ENCODE measurements at regions of chr12 and their contacts with region 1.

Region 1: DNA sequence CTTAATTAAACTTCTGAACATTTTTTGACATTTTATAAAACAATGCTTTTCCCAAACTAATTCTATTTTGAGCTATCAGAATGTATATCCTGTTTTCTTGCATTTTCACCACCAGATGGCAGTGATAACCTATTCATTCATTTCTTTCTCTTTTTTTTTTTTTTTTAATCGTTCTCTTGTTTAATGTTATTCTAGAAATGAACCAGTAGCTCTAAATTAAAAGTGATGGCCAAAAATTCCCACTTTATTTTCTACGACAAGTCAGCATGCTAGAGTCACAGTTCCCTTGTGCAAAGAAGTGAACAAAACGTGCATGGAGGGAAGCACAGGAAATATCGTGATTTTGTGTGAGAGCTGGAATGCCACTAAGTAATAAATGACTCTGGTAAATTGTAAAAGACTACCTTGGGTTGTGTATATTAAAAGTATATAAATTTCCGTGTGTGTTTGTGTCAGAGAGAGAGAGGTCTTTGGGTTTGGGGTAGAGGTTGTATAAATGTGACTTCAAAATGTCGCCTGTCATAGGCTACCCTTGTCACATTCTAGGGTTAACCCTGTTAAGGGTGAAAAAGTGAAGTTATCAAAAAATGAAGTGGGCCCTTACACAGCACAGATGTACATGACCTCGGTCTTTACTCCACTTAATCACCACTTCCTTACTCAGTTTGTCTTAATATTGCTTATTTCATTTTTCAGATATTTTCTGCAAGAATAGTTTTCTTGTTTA is 40.4 kb upstream of the LDHB start:
- DNase-seq: peak; percentile 48
- ATAC-seq: no peak
- H3K4me3 ChIP-seq: no peak overlapping the region
- H3K27ac ChIP-seq: no peak overlapping the region
- H3K4me1 ChIP-seq: 0 out of 2 replicates have a peak, but pooled peaks cover 2% of the 10 kb centered on the region
- H3K27me3 ChIP-seq: no peaks in the 10 kb centered on the region
- CTCF ChIP-seq: peak; percentile 81
- POLR2A ChIP-seq: no peak
- RAD21 ChIP-seq: peak; percentile 74

Region 2: GRCh38 chr12:21539797-21540196 is 158.3 kb before region 1 on chr12:
- CTCF ChIA-PET with region 1: no interaction called
- POLR2A ChIA-PET with region 1: no interaction called
- dilution Hi-C with region 1: no loop called
- in situ Hi-C with region 1: no loop called
- intact Hi-C with region 1: no loop called
- DNase-seq: no peak
- ATAC-seq: no peak
- H3K4me3 ChIP-seq: no peak overlapping the region
- H3K27ac ChIP-seq: no peak overlapping the region
- H3K4me1 ChIP-seq: no peaks in the 10 kb centered on the region
- H3K27me3 ChIP-seq: peaks cover 4% of the 10 kb centered on the region
- CTCF ChIP-seq: no peak
- POLR2A ChIP-seq: no peak
- RAD21 ChIP-seq: no peak

Region 3: DNA sequence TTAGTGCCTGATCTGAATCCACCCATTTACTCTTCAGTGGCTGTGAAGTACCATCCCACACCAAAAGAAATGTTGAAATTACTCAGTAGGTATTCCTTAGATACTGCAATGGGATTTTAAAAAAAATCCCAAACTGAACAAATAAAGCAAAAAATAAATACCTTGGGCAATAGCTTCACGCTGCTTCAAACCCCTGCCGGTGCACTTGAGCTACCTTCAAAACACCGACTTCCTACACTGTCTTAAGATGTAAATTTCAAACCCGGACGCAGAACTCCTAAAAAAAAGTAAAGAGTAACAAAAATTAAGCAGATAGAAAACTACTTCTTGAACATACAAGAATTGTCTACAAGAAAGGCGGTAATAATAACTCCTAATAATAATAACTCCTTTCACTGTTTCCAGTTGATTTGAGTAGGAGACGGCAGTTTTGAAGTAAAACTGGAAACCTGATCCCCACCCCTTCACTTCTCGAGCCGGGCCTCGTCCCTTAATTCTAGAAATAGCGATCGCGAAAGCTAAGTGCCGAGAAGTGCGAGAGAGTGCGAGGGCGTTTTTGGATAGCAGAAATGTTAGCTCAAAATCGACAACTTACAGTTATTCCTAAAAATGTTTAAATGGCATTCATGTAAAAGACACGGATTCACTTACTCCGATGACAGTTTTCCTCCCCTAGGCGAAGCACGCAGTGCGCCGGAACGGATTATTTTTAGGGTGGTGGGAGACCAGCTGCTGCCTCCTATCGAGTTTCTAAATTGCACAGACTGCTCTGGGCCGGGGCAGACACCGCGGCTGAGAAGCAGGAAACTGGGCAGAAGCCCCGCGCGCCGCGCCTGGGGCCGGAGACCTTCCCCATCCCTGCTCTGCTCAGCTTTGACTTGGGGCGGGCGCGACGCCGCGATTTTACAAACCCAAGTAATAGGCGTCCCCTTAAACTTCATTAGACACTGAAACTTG is 242.8 kb after region 1 on chr12 and contains the start of gene ABCC9:
- CTCF ChIA-PET with region 1: interaction called, 4 read pairs
- POLR2A ChIA-PET with region 1: no interaction called
- dilution Hi-C with region 1: no loop called
- in situ Hi-C with region 1: no loop called
- intact Hi-C with region 1: loop called (anchors 2 kb)
- DNase-seq: peak; percentile 33
- ATAC-seq: peak; percentile 75
- H3K4me3 ChIP-seq: peak within 1 kb of the TSS; percentile 63
- H3K27ac ChIP-seq: no peak within 1 kb of the TSS
- H3K4me1 ChIP-seq: 0 out of 2 replicates have a peak, but pooled peaks cover 1% of the 10 kb centered on the region
- H3K27me3 ChIP-seq: peaks cover 15% of the 10 kb centered on the region
- CTCF ChIP-seq: no peak
- POLR2A ChIP-seq: no peak
- RAD21 ChIP-seq: no peak
- total RNA-seq, gene ABCC9: 5.6 and 6.6 TPM in 2 replicates

Region 4: GRCh38 chr12:21989819-21990412 is 291.8 kb after region 1 on chr12:
- CTCF ChIA-PET with region 1: interaction called, 59 read pairs
- POLR2A ChIA-PET with region 1: no interaction called
- dilution Hi-C with region 1: no loop called
- in situ Hi-C with region 1: loop called (anchors 5 kb)
- intact Hi-C with region 1: loop called (anchors 1 kb)
- DNase-seq: peak; percentile 66
- ATAC-seq: peak; percentile 73
- H3K4me3 ChIP-seq: no peak overlapping the region
- H3K27ac ChIP-seq: no peak overlapping the region
- H3K4me1 ChIP-seq: no peaks in the 10 kb centered on the region
- H3K27me3 ChIP-seq: no peaks in the 10 kb centered on the region
- CTCF ChIP-seq: peak; percentile 81
- POLR2A ChIP-seq: no peak
- RAD21 ChIP-seq: peak; percentile 83

Region 5: GRCh38 chr12:22018860-22019259 is 320.8 kb after region 1 on chr12:
- CTCF ChIA-PET with region 1: interaction called, 17 read pairs
- POLR2A ChIA-PET with region 1: no interaction called
- dilution Hi-C with region 1: no loop called
- in situ Hi-C with region 1: no loop called
- intact Hi-C with region 1: loop called (anchors 1 kb)
- DNase-seq: peak; percentile 3
- ATAC-seq: no peak
- H3K4me3 ChIP-seq: no peak overlapping the region
- H3K27ac ChIP-seq: no peak overlapping the region
- H3K4me1 ChIP-seq: no peaks in the 10 kb centered on the region
- H3K27me3 ChIP-seq: no peaks in the 10 kb centered on the region
- CTCF ChIP-seq: peak; percentile 44
- POLR2A ChIP-seq: no peak
- RAD21 ChIP-seq: peak; percentile 32

Region 6: DNA sequence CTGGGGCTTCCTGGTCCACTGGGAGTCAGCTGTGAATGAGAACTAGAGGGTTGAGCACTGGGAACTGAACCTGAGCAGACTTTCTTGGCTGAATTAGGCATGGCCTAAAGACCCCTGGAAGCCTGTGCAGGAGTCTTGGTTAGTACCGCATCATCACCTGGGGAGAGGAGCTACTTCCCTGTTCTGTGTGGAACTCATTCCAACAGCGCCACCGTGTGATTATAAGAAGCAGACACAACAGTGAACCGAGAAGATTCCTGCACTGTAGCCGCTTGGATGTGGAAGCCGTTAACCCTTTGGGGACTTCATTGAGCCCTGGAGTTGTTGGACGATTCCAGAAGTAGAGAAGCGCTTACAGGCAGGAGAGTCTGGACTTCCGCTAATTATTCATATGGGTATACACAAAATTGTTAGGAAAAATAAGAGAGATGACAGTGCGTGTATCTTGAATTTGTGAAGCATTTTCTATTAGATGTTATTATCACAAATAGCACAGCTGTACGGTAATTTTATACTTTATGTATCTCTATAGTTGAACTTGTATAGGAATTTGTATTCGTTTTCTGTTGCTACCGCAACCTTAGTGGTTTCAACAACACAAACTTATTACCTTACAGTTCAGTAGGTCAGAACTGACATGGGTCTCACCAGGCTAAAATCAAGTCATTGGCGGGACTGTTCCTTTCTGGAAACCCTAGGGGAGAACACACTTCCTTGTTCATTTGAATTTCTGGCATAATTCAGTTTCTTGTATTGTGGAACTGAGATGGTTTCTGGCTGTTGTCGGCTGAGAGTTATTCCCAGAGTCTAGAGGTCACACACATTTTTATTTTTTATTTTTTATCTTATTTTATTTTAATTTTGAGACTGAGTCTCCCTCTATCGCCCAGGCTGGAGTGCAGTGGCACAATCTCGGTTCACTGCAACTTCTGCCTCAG is 745.6 kb after region 1 on chr12:
- CTCF ChIA-PET with region 1: interaction called, 3 read pairs
- POLR2A ChIA-PET with region 1: no interaction called
- dilution Hi-C with region 1: no loop called
- in situ Hi-C with region 1: loop called (anchors 25 kb)
- intact Hi-C with region 1: loop called (anchors 2 kb)
- DNase-seq: peak; percentile 79
- ATAC-seq: peak; percentile 99
- H3K4me3 ChIP-seq: no peak overlapping the region
- H3K27ac ChIP-seq: no peak overlapping the region
- H3K4me1 ChIP-seq: peaks cover 3% of the 10 kb centered on the region; the same call in 1 of the 2 replicates
- H3K27me3 ChIP-seq: no peaks in the 10 kb centered on the region; the same call in 1 of the 2 replicates
- CTCF ChIP-seq: peak; percentile 81
- POLR2A ChIP-seq: no peak
- RAD21 ChIP-seq: peak; percentile 88